Transverse colon (tissue), 4 donors: ENCODE measurements at regions of chr9 and their contacts with region 1.

Region 1: GRCh38 chr9:38392235-38393127 is at the start of gene ALDH1B1:
- DNase-seq: peak; percentile 92
- H3K4me3 ChIP-seq: peak within 1 kb of the TSS; percentile 46 to 94 (median 58)
- H3K27ac ChIP-seq: peak within 1 kb of the TSS; percentile 77 to 89 (median 86)
- H3K4me1 ChIP-seq: peaks cover 12 to 52% (median 19%) of the 10 kb centered on the region in 4 donors
- H3K27me3 ChIP-seq: no peaks in the 10 kb centered on the region
- CTCF ChIP-seq: peak in 3 of 5 experiments; percentile 6 to 18 (median 17)
- EP300 ChIP-seq: no peak
- POLR2A ChIP-seq: peak; percentile 66
- total RNA-seq, gene ALDH1B1: 24.9 to 77.2 (median 27.3) TPM

Region 2: DNA sequence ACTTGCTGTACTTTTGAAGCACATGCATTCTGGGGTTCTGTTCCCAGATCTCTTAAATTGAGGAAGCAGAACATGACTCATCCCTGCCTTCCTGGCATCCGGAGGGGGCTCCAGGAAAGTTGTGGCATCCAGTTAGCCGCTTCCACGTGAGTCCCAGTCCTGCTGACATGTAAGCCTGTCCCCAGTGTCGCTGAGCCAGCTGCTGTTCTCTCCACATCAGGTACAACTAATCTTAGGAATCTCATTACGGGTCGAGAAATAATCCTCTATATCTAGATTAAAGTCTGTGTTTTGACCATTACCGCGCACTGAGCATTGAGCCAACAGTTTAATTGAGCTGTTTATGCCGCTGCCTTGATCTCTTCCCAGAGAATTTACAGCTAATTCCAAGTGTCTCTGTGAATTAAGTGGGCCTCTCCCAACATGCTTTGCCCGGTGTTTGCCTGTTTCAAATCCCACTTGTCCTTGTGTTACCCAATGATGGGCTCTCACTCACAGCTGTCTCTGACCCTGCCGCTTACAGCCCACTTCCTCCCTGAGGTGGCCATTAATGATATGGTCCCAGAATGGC is 312.9 kb before region 1 on chr9:
- in situ Hi-C with region 1: no loop called
- intact Hi-C with region 1: loop called (anchors 10 kb)
- DNase-seq: peak; percentile 28
- H3K4me3 ChIP-seq: no peak overlapping the region
- H3K27ac ChIP-seq: no peak overlapping the region
- H3K4me1 ChIP-seq: peaks cover 0 to 7% (median 3%) of the 10 kb centered on the region in 4 donors
- H3K27me3 ChIP-seq: no peaks in the 10 kb centered on the region
- CTCF ChIP-seq: no peak
- EP300 ChIP-seq: no peak
- POLR2A ChIP-seq: no peak